ENCODE measurements at regions of chr7 and their contacts with region 1.

Region 1: GRCh38 chr7:38660427-38661099 is 29.4 kb upstream of the AMPH start:
- DNase-seq: peak; percentile 27
- ATAC-seq: peak; percentile 94
- H3K4me3 ChIP-seq: no peak overlapping the region
- H3K27ac ChIP-seq: no peak overlapping the region
- H3K4me1 ChIP-seq: no peaks in the 10 kb centered on the region
- H3K27me3 ChIP-seq: peaks cover 32% of the 10 kb centered on the region
- CTCF ChIP-seq: peak; percentile 67 to 78 (median 78)
- POLR2A ChIP-seq: no peak
- RAD21 ChIP-seq: peak; percentile 74

Region 2: DNA sequence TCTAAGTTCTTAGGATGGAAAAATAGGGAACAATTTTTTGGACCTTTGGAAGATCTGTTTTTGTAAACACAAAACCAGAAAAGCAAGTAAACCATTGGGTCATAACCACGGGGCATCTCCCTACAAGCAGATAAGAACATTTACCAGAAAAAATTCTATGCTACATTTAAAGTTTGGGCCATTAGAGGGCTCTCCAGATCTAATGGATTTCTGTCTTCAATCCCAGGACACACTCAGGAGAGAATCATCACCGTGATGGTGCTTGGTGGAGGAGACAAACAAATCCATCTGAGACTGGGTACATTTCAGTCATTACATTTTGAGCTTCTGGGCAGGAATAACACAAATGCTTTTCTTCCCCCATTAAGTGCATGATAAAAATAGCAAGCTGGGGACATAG is 208.7 kb before region 1 on chr7:
- CTCF ChIA-PET with region 1: no interaction called
- POLR2A ChIA-PET with region 1: no interaction called
- RAD21 ChIA-PET with region 1: no interaction called
- intact Hi-C with region 1: loop called (anchors 5 kb)
- DNase-seq: peak; percentile 10
- ATAC-seq: peak; percentile 71
- H3K4me3 ChIP-seq: no peak overlapping the region
- H3K27ac ChIP-seq: no peak overlapping the region
- H3K4me1 ChIP-seq: no peaks in the 10 kb centered on the region
- H3K27me3 ChIP-seq: peaks cover 49% of the 10 kb centered on the region; the same call in 1 of the 2 replicates
- CTCF ChIP-seq: peak; percentile 8 to 26 (median 25); a peak in 3 of 6 replicates
- POLR2A ChIP-seq: no peak
- RAD21 ChIP-seq: peak; percentile 45

Region 3: GRCh38 chr7:38716397-38716796 is 55.8 kb after region 1 on chr7:
- CTCF ChIA-PET with region 1: no interaction called
- POLR2A ChIA-PET with region 1: no interaction called
- RAD21 ChIA-PET with region 1: no interaction called
- intact Hi-C with region 1: loop called (anchors 2 kb)
- DNase-seq: no peak
- ATAC-seq: 0 out of 2 replicates have a peak, but pooled peaks have one; percentile 44
- H3K4me3 ChIP-seq: no peak overlapping the region
- H3K27ac ChIP-seq: no peak overlapping the region
- H3K4me1 ChIP-seq: no peaks in the 10 kb centered on the region
- H3K27me3 ChIP-seq: no peaks in the 10 kb centered on the region
- CTCF ChIP-seq: peak in 2 of 3 experiments; percentile 18 to 29; a peak in 3 of 6 replicates
- POLR2A ChIP-seq: no peak
- RAD21 ChIP-seq: no peak